ENCODE measurements at regions of chr7 and their contacts with region 1.

Region 1: DNA sequence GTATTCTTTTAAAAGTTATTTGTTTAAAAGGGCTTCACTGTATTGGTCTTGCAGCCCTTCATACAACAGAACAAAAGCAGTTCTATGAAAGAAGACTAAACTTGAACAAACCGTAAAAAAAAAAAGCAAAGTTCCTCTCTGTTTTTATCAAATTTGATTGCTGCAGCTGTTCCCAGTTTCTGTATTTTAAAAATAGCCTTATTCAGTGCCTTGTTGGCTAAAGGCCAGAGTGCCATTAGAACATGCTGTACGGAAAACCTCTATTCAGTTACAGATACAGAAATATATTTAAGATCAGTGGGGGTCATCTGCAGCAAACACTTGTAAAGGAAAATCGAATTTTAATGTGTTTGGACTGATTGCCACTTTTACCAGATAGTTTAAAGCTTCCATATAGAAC is 207.8 kb upstream of the ETV1 start:
- DNase-seq: no peak
- ATAC-seq: peak; percentile 74

Region 2: GRCh38 chr7:14419531-14419930 is 222.3 kb after region 1 on chr7:
- intact Hi-C with region 1: loop called (anchors 10 kb)
- DNase-seq: no peak
- ATAC-seq: no peak